ENCODE measurements at regions of chr6 and their contacts with region 1.

Region 1: DNA sequence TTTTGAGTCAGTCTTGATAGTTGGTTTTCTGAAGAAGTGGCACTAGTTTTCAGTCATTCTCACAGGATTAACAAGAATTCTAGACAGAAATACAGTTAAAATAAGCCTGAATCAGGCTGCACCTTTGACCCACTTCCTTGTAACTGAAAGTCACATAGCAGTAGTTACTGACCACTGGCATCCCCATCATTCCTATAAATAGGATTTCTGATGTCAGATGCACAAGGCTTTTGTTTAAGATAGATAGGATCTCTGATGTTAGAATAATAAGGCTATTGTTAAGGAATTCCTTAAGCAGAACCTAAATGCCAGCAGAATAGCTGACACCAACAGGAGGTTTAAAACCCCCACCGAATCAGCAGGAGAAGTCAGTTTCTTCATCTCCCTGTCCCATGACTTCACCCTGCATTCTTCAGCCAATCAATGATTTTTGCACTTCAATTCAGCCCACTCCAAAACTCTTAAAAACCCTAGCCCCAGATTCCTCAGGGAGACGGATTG is 30.6 kb upstream of the ZBTB24 start:
- DNase-seq: no peak
- CTCF ChIP-seq: no peak

Region 2: DNA sequence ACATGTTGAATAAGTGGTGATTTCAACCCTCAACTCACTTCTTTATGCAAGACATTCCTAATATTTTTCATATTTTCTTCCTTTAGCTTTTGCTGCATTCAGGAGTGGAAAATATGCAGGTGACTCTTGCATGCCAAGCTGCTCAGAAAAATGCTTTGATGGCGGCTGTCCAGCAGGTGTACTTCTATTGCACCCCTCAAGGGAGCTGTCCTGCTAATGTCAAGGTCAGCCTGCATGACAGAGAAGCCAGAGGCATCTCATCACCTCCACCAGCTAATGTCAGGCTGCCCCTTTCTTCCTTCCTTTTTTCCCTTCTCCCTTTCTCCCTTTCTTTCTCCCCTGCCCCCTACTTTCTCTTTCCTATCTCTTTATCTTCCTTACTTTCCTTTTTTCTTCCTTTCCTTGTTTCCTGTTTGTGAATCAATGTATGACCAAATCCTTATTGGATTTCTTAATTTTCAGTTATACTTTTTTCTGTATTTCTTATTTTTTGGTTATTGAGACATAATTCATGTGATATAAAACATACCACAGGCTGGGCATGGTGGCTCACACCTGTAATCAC is 243.6 kb before region 1 on chr6:
- in situ Hi-C with region 1: no loop called
- DNase-seq: no peak
- CTCF ChIP-seq: no peak

Region 3: DNA sequence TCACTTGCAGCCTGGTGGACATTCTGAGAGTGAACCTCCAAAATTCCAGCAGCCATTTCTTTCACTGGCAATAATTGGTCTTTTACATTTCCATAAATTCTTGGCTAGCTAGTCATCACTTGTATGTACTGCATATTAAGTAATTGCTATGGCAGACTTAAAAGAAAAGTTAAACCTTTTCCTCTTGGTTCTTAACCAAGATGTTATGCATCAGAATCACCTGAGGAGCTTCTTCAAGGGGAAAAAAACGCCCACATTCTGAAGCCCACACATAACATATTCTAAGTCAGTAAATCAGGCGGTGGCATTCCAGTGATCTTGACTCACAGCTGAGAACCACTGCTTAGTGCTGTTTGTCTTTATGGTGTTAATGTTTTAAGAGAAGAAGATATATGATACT is 703.6 kb after region 1 on chr6:
- in situ Hi-C with region 1: no loop called
- DNase-seq: no peak
- CTCF ChIP-seq: no peak

Region 4: DNA sequence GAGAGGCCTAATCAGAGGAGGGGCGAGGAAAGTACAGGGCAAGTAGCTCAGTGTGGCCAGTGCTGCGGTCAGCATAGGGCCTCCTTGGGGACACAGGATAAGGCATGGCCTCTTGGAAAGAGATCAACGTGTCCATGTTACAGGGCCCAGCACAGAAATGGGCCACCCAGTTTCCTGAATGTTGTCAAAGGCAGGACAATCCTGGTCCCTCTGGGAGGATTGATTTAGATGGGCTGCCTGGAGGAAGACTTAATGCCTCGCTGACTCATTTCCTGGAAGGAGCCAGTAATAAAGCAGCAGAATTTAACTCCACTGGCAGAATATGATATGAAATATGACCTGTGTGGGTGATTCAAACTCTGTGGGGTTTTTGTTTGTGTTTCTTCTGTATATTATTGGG is 885.2 kb after region 1 on chr6:
- in situ Hi-C with region 1: loop called (anchors 25 kb)
- DNase-seq: no peak
- CTCF ChIP-seq: no peak